ENCODE measurements at regions of chr7 and their contacts with region 1.

Region 1: DNA sequence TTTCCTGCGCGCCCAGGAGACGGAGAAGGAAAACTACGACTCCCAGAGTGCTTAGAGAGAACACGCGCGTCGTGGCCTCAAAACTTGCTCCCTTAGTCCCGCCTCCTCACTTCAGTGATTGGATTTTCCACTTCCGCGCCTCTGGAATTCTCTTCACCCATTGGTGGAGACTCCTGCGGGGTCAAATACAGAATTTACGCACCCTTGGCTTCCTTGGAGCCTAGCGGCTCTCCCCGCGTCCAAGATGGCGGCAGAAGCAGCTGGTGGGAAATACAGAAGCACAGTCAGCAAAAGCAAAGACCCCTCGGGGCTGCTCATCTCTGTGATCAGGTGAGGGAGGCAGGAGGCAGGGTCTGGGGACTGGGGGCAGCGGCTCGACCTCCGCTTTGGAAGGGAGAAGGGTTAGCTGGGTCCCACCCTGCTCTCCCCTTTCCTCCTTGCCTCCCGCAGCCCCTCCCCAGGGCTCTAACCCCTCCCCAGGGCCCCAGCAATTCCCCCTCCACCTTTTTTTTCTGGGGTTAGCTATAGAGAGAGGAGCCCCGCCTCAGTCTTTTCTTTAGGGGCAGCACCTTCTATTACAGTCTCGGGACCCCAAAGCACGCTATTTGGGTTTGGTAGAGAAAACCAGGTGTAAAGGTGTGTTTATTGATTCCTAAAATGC is at the start of gene EXOC4:
- DNase-seq: peak; percentile 90 to 94
- ATAC-seq: peak; percentile 100
- H3K4me3 ChIP-seq: peak within 1 kb of the TSS; percentile 64 to 93
- H3K27ac ChIP-seq: no peak within 1 kb of the TSS
- H3K4me1 ChIP-seq: no peaks in the 10 kb centered on the region
- H3K27me3 ChIP-seq: no peaks in the 10 kb centered on the region
- total RNA-seq, gene EXOC4: 69.5 to 109 TPM

Region 2: GRCh38 chr7:132560825-132561529 is 692.0 kb before region 1 on chr7:
- intact Hi-C with region 1: no loop called
- DNase-seq: no peak
- ATAC-seq: no peak
- H3K4me3 ChIP-seq: no peak overlapping the region
- H3K27ac ChIP-seq: no peak overlapping the region
- H3K4me1 ChIP-seq: no peaks in the 10 kb centered on the region
- H3K27me3 ChIP-seq: no peaks in the 10 kb centered on the region

Region 3: GRCh38 chr7:133081599-133082389 is 171.2 kb before region 1 on chr7 and contains the start of gene CHCHD3:
- intact Hi-C with region 1: loop called in 1 of 2 experiments (anchors 10 kb)
- DNase-seq: peak; percentile 98 to 99
- ATAC-seq: peak; percentile 100
- H3K4me3 ChIP-seq: peak within 1 kb of the TSS; percentile 58 to 70
- H3K27ac ChIP-seq: peak within 1 kb of the TSS in 1 of 2 donors; percentile 26
- H3K4me1 ChIP-seq: no peaks in the 10 kb centered on the region
- H3K27me3 ChIP-seq: no peaks in the 10 kb centered on the region
- total RNA-seq, gene CHCHD3: 32.2 to 39.9 TPM

Region 4: DNA sequence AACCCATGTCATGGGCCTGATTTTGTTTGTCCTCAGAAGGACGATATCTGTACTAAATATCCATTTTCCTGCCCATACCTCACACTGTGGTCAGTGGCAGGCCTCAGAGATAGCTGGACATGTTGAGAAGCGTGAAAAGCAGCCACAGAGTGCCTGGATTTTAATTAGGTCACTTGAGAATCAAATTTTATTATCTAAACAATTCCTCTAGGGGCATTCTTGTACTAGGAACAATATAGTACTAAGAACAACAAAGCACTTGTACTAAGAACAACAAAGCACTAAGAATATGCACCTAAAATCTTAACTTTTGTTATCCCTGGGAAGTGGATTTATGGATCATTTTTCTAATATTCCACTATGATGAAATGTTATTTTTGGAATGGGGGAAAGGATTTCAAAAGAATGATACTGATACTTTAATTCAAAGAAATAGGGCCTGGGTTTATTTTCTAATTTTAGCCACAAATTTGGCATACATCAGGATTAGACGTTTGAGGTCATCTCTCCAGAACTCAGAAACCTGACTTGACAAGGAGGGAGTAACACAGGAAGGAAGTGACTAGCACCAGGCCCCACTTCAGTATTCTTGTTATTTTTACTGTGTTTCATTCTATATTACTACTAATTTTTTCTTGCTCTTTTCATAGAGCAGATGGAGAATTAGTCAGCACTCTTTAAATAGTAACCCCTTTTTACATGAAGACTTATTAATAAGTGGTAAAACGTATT is 112.1 kb after region 1 on chr7:
- intact Hi-C with region 1: loop called (anchors 5 to 10 kb)
- DNase-seq: no peak
- ATAC-seq: peak; percentile 46
- H3K4me3 ChIP-seq: no peak overlapping the region
- H3K27ac ChIP-seq: peak overlapping the region; percentile 43 to 79
- H3K4me1 ChIP-seq: peaks cover 0 to 4% of the 10 kb centered on the region in 2 donors
- H3K27me3 ChIP-seq: no peaks in the 10 kb centered on the region

Measured in aorta (tissue), 5 donors.